HEK293 (cell line): ENCODE measurements at regions of chr2 and their contacts with region 1.

Region 1: GRCh38 chr2:113198790-113199612 is 25.2 kb downstream of the PSD4 start:
- H3K4me3 ChIP-seq: peak overlapping the region; percentile 75
- H3K27ac ChIP-seq: peak overlapping the region; percentile 66; the same call in 1 of the 2 replicates
- H3K4me1 ChIP-seq: no peaks in the 10 kb centered on the region
- CTCF ChIP-seq: peak; percentile 99

Region 2: DNA sequence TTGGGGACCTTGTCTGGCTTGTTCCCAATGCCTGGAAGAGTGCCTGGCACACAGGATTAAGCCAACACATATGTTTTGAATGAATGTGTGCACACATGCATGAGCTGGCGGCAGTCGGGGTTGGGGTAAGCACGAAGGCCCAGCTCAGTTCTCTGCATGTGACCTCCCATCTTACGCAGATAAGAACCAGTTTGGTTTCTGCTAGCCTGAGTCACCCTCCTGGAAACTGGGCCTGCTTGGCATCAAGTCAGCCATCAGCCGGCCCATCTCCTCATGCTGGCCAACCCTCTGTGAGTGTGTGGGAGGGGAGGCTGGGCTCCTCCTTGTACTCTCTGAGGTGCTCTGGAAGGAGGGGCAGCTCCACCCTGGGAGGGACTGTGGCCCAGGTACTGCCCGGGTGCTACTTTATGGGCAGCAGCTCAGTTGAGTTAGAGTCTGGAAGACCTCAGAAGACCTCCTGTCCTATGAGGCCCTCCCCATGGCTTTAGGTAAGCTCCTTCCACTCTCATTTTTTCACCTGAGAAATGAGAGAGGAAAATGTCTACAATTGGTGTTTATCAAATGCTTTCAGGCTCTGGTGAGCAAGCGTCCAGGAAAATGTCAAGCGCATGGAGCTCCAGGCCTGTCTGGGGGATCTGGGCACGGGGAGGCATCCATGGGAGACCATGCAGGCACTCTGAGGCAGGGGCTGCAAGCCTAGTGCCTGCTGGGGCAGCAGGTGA is 81.3 kb before region 1 on chr2:
- CTCF ChIA-PET with region 1: interaction called, 11 read pairs
- POLR2A ChIA-PET with region 1: no interaction called
- H3K4me3 ChIP-seq: no peak overlapping the region
- H3K27ac ChIP-seq: no peak overlapping the region
- H3K4me1 ChIP-seq: no peaks in the 10 kb centered on the region
- CTCF ChIP-seq: no peak

Region 3: DNA sequence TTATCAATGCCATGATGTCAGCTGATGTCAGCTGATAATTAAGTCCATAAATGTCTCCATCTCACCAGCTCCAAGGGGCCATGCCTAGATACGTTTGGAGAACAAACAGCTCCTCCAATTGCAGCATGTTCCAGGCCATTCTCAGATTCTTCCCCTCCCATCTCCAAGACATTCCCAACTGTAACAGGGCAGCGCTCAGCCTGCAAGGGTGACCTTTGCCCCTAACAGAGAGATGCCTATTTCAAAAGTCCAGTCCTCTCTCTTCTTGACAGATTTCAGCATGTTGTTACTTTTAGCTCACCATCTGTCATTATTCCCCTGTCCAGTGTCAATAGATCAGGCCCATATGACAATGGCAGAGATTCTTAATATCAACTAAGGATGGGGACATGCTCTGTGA is 15.3 kb before region 1 on chr2:
- CTCF ChIA-PET with region 1: interaction called, 13 read pairs
- POLR2A ChIA-PET with region 1: interaction called, 7 read pairs
- H3K4me3 ChIP-seq: no peak overlapping the region
- H3K27ac ChIP-seq: no peak overlapping the region
- H3K4me1 ChIP-seq: no peaks in the 10 kb centered on the region
- CTCF ChIP-seq: no peak

Region 4: DNA sequence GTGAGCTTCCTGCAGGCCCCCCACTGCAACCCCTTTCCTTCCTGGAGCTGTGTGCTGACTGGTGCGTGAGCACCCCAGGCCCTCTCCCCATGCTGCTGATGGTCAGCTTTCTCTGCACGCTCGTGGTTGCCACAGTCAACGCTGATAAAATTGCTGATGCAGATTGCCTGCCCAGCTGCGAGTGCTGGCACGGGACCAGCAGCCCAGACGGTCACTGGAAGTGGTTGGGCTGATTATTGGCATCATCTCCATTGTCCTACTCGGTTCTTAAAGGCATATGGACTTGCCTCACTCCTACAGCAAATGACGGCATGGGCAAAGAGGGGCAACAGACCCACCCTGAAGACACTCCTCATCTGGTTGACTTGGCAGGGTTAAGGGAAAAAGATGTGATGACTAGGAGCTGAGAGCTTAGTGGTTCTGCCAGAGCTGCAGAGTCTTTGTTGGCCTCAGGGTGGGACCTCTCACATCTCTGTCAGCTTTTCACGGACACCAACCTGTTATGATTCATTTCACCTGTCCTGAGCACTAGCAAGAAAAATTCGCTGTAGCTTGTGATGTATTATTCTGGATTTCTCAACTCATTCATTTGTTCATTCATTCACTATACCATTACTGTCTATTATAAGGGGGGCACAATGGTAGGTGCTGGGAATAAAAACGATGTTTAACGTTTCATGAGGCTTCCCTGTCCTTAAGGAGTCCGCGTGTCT is 41.3 kb after region 1 on chr2:
- CTCF ChIA-PET with region 1: interaction called, 10 read pairs
- POLR2A ChIA-PET with region 1: no interaction called
- H3K4me3 ChIP-seq: no peak overlapping the region
- H3K27ac ChIP-seq: no peak overlapping the region
- H3K4me1 ChIP-seq: peaks cover 11% of the 10 kb centered on the region
- CTCF ChIP-seq: no peak

Region 5: DNA sequence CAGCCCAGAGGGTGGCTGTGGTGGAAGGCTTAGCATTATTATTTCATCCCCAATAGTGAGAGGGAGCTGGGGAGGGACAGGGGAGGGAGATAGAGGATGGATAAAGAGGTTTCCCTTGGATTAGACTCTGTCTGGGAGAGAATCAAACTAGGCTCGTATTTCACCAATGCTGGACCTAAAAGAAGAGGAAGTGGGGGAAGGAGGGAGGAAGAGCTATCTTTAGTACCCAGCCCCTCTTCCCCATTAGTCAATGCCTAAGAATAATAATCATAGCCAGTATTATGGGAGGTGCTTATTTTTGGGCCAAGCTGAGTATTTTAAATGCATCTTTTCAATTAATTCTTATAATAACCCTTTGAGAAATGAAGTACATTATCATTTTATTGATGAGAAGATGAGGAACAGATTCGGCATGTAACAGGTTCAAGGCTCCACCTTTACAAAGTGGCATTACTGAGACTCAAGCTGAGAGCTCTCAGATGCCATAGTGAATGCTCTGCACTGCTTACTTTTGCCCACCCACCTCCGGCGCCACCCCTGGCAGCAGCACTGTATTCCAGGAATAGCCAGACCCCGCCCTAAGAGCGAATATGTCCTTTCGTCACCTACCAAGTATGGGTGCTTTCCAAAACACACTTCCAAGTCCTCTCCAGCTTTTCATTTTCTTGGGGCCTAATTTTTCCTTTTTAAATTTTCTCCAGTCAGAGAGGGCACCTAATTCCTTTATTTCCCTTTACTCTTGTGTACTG is 58.7 kb after region 1 on chr2:
- CTCF ChIA-PET with region 1: interaction called, 20 read pairs
- POLR2A ChIA-PET with region 1: no interaction called
- H3K4me3 ChIP-seq: no peak overlapping the region
- H3K27ac ChIP-seq: no peak overlapping the region
- H3K4me1 ChIP-seq: no peaks in the 10 kb centered on the region
- CTCF ChIP-seq: no peak